GM12878 (cell line): ENCODE measurements at regions of chr6 and their contacts with region 1.

Region 1: DNA sequence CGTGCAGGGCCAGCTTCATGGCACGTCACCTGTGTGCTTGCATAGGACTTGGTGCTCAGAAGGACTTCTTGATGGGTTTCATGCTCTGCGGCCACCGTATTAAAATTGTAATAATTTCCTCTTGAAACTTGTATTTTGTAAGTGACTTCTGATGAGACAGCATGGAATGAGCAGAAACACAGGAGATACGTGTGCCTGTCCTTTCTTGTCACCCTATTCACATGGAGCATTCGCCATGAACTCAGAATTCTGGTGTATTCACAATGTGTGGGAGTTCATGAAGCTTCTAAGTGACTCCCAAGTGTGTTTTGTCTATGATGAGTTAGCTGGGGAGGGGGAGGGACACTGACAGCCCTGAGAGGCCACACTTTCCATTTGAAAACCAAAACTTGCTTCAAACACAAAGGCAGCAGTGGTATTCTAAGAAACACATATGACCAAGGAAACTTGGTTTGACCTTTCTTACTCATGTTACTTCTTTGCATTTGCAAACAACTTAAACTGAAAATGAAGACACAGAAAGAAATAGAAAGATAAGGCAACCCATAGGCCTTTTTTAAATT is 92.1 kb upstream of the NEDD9 start:
- DNase-seq: peak; percentile 61
- ATAC-seq: peak; percentile 71
- H3K4me3 ChIP-seq: no peak overlapping the region
- H3K27ac ChIP-seq: peak overlapping the region; percentile 45
- H3K4me1 ChIP-seq: peaks cover 41% of the 10 kb centered on the region
- H3K27me3 ChIP-seq: no peaks in the 10 kb centered on the region
- CTCF ChIP-seq: no peak
- EP300 ChIP-seq: peak; percentile 57 to 76; a peak in 2 of 4 replicates
- POLR2A ChIP-seq: no peak
- RAD21 ChIP-seq: 0 out of 2 replicates have a peak, but pooled peaks have one; percentile 13

Region 2: DNA sequence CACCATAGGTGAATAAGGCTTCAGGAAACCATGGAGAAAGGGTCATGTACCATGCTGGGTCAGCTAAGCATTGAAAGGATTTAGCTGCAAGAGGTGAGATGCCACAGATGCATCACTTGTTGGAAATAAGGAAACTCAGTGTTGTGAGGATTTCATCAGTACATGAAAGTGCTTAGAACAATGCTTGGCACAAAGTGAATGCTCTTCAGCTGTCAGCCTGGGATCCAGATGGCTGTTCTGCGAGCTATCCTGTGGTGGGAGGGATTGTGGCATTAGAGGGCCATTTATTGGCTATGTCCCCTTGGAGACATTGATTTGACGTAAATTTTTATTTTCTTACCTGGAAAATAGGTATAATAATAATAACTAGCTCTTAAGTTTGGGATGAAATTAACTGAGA is 333.4 kb before region 1 on chr6:
- CTCF ChIA-PET with region 1: no interaction called
- POLR2A ChIA-PET with region 1: no interaction called
- RAD21 ChIA-PET with region 1: no interaction called
- SMC1A ChIA-PET with region 1: no interaction called
- in situ Hi-C with region 1: no loop called
- intact Hi-C with region 1: no loop called
- DNase-seq: no peak
- ATAC-seq: no peak
- H3K4me3 ChIP-seq: no peak overlapping the region
- H3K27ac ChIP-seq: no peak overlapping the region
- H3K4me1 ChIP-seq: no peaks in the 10 kb centered on the region
- H3K27me3 ChIP-seq: no peaks in the 10 kb centered on the region
- CTCF ChIP-seq: no peak
- EP300 ChIP-seq: no peak
- POLR2A ChIP-seq: no peak
- RAD21 ChIP-seq: no peak

Region 3: GRCh38 chr6:11232193-11232769 is 92.3 kb before region 1 on chr6 and contains the start of gene NEDD9:
- CTCF ChIA-PET with region 1: interaction called, 5 read pairs
- POLR2A ChIA-PET with region 1: interaction called, 5 read pairs
- RAD21 ChIA-PET with region 1: interaction called, 25 read pairs
- SMC1A ChIA-PET with region 1: interaction called, 8 read pairs
- in situ Hi-C with region 1: no loop called
- intact Hi-C with region 1: no loop called
- DNase-seq: peak; percentile 86
- ATAC-seq: peak; percentile 98
- H3K4me3 ChIP-seq: peak within 1 kb of the TSS; percentile 84
- H3K27ac ChIP-seq: peak within 1 kb of the TSS; percentile 66
- H3K4me1 ChIP-seq: peaks cover 10% of the 10 kb centered on the region; the same call in 1 of the 2 replicates
- H3K27me3 ChIP-seq: no peaks in the 10 kb centered on the region
- CTCF ChIP-seq: no peak
- EP300 ChIP-seq: no peak
- POLR2A ChIP-seq: peak; percentile 96
- RAD21 ChIP-seq: no peak
- polyA plus RNA-seq, gene NEDD9: 4.9 to 6.3 TPM

Region 4: DNA sequence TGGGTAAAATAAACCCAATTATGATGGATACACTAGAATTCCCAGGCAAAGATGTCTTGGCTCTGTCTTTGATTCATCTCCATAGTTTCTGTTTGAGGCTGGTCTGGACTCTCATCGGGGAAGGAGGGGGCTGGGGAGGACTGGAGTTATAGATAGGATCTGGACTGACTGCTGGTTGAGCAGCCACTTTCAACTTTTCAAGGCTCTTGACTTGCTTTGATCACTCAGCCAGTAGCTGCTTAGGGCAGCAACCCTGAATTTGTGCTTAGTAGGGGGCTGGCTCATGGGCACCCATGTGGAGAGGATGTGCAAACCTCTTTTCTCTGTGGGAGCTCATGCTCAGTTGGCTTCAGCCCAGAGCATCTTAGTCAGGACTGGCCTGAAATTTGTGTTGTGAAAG is 22.0 kb after region 1 on chr6:
- CTCF ChIA-PET with region 1: interaction called, 16 read pairs
- POLR2A ChIA-PET with region 1: interaction called, 9 read pairs
- RAD21 ChIA-PET with region 1: interaction called, 9 read pairs
- SMC1A ChIA-PET with region 1: interaction called, 66 read pairs
- in situ Hi-C with region 1: no loop called
- intact Hi-C with region 1: no loop called
- DNase-seq: peak; percentile 71
- ATAC-seq: peak; percentile 87
- H3K4me3 ChIP-seq: no peak overlapping the region
- H3K27ac ChIP-seq: peak overlapping the region; percentile 65
- H3K4me1 ChIP-seq: peaks cover 39% of the 10 kb centered on the region
- H3K27me3 ChIP-seq: no peaks in the 10 kb centered on the region
- CTCF ChIP-seq: no peak
- EP300 ChIP-seq: peak in 1 of 2 experiments; percentile 22; a peak in 1 of 4 replicates
- POLR2A ChIP-seq: no peak
- RAD21 ChIP-seq: no peak

Region 5: GRCh38 chr6:11374036-11375010 is 49.8 kb after region 1 on chr6:
- CTCF ChIA-PET with region 1: interaction called, 3 read pairs
- POLR2A ChIA-PET with region 1: interaction called, 8 read pairs
- RAD21 ChIA-PET with region 1: interaction called, 118 read pairs
- SMC1A ChIA-PET with region 1: interaction called, 109 read pairs
- in situ Hi-C with region 1: no loop called
- intact Hi-C with region 1: loop called (anchors 2 kb)
- DNase-seq: peak; percentile 96
- ATAC-seq: peak; percentile 85
- H3K4me3 ChIP-seq: 0 out of 2 replicates have a peak overlapping the region, but pooled peaks have one; percentile 44
- H3K27ac ChIP-seq: peak overlapping the region; percentile 89
- H3K4me1 ChIP-seq: peaks cover 44% of the 10 kb centered on the region
- H3K27me3 ChIP-seq: no peaks in the 10 kb centered on the region
- CTCF ChIP-seq: no peak
- EP300 ChIP-seq: peak; percentile 83 to 95
- POLR2A ChIP-seq: peak; percentile 43; the same call in 1 of the 2 replicates
- RAD21 ChIP-seq: peak; percentile 25